Pancreas (tissue), 10 donors: ENCODE measurements at regions of chr1 and their contacts with region 1.

Region 1: DNA sequence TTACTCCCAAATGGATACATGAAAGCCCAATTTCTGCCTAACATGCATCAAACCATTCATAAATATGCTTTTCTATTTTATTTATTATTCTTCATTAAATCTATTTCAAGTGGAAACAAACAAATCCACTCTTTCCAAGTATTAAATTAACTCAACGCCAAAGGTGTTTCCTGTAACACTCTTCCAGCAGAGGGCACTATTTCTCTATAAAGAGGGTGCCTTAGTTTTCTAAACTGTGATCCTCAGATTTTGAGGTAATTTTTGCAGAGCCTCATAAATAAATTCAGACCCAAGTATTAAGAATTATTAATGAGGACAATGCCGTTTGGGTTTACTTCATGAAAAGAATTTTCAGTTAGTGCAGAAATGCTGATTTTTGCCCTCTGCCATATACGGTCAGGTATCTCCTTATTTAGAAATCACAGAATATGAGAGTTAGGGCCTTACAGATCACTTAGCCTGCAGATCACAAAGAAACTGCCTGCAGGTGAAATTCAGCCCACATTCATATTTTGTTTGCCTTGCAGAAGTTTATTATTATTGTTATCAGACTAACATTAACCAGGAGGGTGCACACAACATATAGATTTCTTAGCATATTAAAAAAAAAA is 40.1 kb upstream of the MYSM1 start:
- DNase-seq: peak in 1 of 6 donors; percentile 22
- ATAC-seq: peak; percentile 72 to 88 (median 84)
- H3K4me3 ChIP-seq: no peak overlapping the region
- H3K27ac ChIP-seq: no peak overlapping the region
- H3K4me1 ChIP-seq: no peaks in the 10 kb centered on the region
- H3K27me3 ChIP-seq: no peaks in the 10 kb centered on the region
- CTCF ChIP-seq: peak; percentile 41 to 70 (median 61)

Region 2: GRCh38 chr1:59707178-59707791 is 967.3 kb after region 1 on chr1:
- intact Hi-C with region 1: loop called in 1 of 3 experiments (anchors 10 kb)
- DNase-seq: no peak
- ATAC-seq: peak in 3 of 4 donors; percentile 64 to 78 (median 77)
- H3K4me3 ChIP-seq: no peak overlapping the region
- H3K27ac ChIP-seq: no peak overlapping the region
- H3K4me1 ChIP-seq: no peaks in the 10 kb centered on the region
- H3K27me3 ChIP-seq: no peaks in the 10 kb centered on the region
- CTCF ChIP-seq: no peak

Region 3: GRCh38 chr1:59759156-59759925 is 1019.4 kb after region 1 on chr1:
- intact Hi-C with region 1: loop called in 1 of 3 experiments (anchors 10 kb)
- DNase-seq: peak; percentile 70 to 90 (median 78)
- ATAC-seq: peak; percentile 97 to 100 (median 100)
- H3K4me3 ChIP-seq: peak overlapping the region in 2 of 4 donors; percentile 17 to 19
- H3K27ac ChIP-seq: peak overlapping the region in 2 of 4 donors; percentile 53 to 55
- H3K4me1 ChIP-seq: peaks cover 0 to 5% (median 0%) of the 10 kb centered on the region in 3 donors
- H3K27me3 ChIP-seq: no peaks in the 10 kb centered on the region
- CTCF ChIP-seq: peak; percentile 74 to 87 (median 86)